ENCODE measurements at regions of chr20 and their contacts with region 1.

Region 1: GRCh38 chr20:16801919-16802911 is 54.1 kb downstream of the OTOR start:
- DNase-seq: peak; percentile 43
- ATAC-seq: no peak
- H3K4me3 ChIP-seq: no peak overlapping the region
- H3K4me3 Mint-ChIP-seq: no peak overlapping the region
- H3K27ac ChIP-seq: no peak overlapping the region
- H3K27ac Mint-ChIP-seq: no peak overlapping the region
- H3K4me1 ChIP-seq: no peaks in the 10 kb centered on the region
- H3K4me1 Mint-ChIP-seq: no peaks in the 10 kb centered on the region
- H3K27me3 ChIP-seq: peaks cover 0 to 14% (median 9%) of the 10 kb centered on the region in 4 experiments
- H3K27me3 Mint-ChIP-seq: peaks cover 43% of the 10 kb centered on the region
- CTCF ChIP-seq: peak; percentile 98

Region 2: DNA sequence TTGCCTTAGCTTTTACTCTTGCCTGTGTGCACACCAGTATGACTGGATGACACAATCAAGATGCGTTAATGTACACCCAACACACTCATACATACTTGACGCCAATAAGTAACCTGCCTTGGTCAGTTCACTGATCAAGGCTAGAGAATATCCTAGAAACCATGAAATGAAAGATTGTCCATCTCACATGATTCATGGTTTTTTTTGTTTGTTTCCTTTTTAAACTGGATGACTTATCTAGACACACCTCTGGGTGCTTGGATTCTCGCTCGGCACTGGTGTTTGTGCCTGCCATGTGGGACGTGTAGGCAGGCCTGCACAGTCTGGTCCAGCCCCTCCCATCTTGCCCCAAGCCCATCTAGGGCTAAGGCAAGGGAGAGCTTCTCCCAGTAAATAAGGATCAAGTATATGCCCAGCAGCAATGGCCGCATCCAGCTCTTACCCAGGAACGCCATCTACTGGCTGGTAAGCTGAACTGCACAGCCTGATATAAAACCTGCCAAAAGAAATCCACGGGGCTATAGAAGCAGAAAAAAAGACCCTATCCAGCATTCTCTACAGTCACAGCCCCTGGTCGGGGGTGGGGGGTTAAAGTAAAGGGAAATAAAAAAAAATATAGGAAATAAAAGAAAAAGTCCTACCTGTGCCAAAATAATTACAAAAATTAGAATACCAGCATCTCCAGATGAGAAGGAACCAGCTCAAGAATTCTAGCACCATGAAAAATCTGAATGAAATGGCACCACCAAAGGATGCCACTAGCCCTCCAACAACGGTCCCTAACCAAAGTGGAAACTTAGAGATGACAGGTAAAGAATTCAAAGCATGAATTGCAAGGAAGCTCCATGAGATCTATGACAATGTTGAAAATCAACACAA is 19.2 kb after region 1 on chr20:
- CTCF ChIA-PET with region 1: interaction called, 38 read pairs
- POLR2A ChIA-PET with region 1: no interaction called
- intact Hi-C with region 1: no loop called
- DNase-seq: peak; percentile 39
- ATAC-seq: peak; percentile 36
- H3K4me3 ChIP-seq: no peak overlapping the region
- H3K4me3 Mint-ChIP-seq: no peak overlapping the region
- H3K27ac ChIP-seq: no peak overlapping the region
- H3K27ac Mint-ChIP-seq: no peak overlapping the region
- H3K4me1 ChIP-seq: no peaks in the 10 kb centered on the region
- H3K4me1 Mint-ChIP-seq: no peaks in the 10 kb centered on the region
- H3K27me3 ChIP-seq: peaks cover 0 to 11% (median 3%) of the 10 kb centered on the region in 4 experiments
- H3K27me3 Mint-ChIP-seq: peaks cover 26% of the 10 kb centered on the region
- CTCF ChIP-seq: peak; percentile 88

Region 3: GRCh38 chr20:16885746-16886145 is 83.5 kb after region 1 on chr20:
- CTCF ChIA-PET with region 1: no interaction called
- POLR2A ChIA-PET with region 1: no interaction called
- intact Hi-C with region 1: no loop called
- DNase-seq: no peak
- ATAC-seq: no peak
- H3K4me3 ChIP-seq: no peak overlapping the region
- H3K4me3 Mint-ChIP-seq: no peak overlapping the region
- H3K27ac ChIP-seq: no peak overlapping the region
- H3K27ac Mint-ChIP-seq: no peak overlapping the region
- H3K4me1 ChIP-seq: no peaks in the 10 kb centered on the region
- H3K4me1 Mint-ChIP-seq: no peaks in the 10 kb centered on the region
- H3K27me3 ChIP-seq: no peaks in the 10 kb centered on the region
- H3K27me3 Mint-ChIP-seq: peaks cover 3% of the 10 kb centered on the region
- CTCF ChIP-seq: no peak

Region 4: DNA sequence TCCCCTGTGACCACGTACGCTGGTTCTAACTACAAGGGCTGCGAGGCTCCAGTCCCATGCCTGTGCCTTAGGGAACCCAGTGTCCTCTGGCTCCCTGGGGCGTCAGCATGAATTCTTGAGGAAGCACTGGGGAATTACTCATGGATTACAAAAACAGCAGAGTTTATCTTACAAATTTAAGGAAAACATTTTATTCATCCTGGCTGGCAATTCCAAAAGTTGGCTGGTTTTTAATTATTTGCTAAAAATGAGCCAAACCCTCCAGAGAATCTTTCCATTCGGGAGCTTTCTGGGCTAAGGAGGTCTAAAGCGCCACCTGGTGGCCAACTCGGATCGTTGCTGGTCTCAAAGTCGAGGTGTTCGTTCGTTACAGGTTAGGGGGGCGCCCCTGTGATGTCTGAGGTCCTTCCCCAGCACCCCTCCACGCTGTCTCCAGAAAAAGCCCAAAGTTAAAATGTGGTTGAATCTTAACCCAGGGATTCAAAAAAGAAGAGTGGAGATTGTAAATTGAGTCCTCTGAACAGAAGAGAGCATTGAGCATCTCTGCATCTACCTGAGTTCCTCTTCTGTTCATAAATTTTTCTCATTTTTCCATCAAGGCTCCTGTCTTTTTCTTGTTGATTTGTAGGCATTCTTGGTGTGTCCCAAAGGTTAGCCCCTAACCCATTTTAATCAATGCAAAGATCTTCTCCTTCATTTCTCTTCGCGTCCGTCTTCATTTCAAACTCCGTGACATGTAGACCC is 629.6 kb after region 1 on chr20:
- CTCF ChIA-PET with region 1: interaction called, 61 read pairs
- POLR2A ChIA-PET with region 1: no interaction called
- intact Hi-C with region 1: no loop called
- DNase-seq: peak; percentile 57
- ATAC-seq: no peak
- H3K4me3 ChIP-seq: no peak overlapping the region
- H3K4me3 Mint-ChIP-seq: no peak overlapping the region
- H3K27ac ChIP-seq: no peak overlapping the region
- H3K27ac Mint-ChIP-seq: no peak overlapping the region
- H3K4me1 ChIP-seq: no peaks in the 10 kb centered on the region
- H3K4me1 Mint-ChIP-seq: no peaks in the 10 kb centered on the region
- H3K27me3 ChIP-seq: peaks cover 0 to 11% (median 2%) of the 10 kb centered on the region in 4 experiments
- H3K27me3 Mint-ChIP-seq: peaks cover 27% of the 10 kb centered on the region
- CTCF ChIP-seq: peak; percentile 95

Region 5: DNA sequence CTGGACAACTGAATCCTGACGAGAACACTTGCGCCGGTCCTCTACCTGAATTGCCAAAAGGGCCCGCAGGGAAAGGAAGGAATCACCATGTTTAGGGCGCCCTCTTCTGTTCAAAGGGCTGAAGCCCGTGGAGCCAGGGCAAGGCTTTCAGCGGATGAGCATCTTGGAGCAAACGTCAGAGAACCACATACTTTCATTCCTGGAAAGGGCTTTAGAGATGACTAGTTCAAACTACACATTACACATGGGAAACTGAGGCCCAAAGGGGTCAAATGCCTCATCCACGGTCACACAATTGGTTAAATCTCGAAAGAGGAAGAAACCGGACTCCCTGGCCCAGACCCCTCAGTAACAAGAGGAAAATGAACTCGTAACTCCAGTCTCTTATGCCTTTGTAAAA is 1474.6 kb after region 1 on chr20:
- CTCF ChIA-PET with region 1: no interaction called
- POLR2A ChIA-PET with region 1: no interaction called
- intact Hi-C with region 1: loop called (anchors 5 kb)
- DNase-seq: peak; percentile 68
- ATAC-seq: peak; percentile 49
- H3K4me3 ChIP-seq: no peak overlapping the region
- H3K4me3 Mint-ChIP-seq: no peak overlapping the region
- H3K27ac ChIP-seq: no peak overlapping the region
- H3K27ac Mint-ChIP-seq: no peak overlapping the region
- H3K4me1 ChIP-seq: peaks cover 0 to 4% of the 10 kb centered on the region in 2 donors
- H3K4me1 Mint-ChIP-seq: no peaks in the 10 kb centered on the region
- H3K27me3 ChIP-seq: peaks cover 0 to 30% (median 17%) of the 10 kb centered on the region in 4 experiments
- H3K27me3 Mint-ChIP-seq: peaks cover 31% of the 10 kb centered on the region
- CTCF ChIP-seq: peak; percentile 71